ENCODE measurements at regions of chr9 and their contacts with region 1.

Region 1: GRCh38 chr9:101235105-101235866 is 149.5 kb downstream of the BAAT start:
- DNase-seq: no peak
- H3K4me3 ChIP-seq: no peak overlapping the region
- H3K27ac ChIP-seq: no peak overlapping the region
- H3K4me1 ChIP-seq: no peaks in the 10 kb centered on the region
- H3K27me3 ChIP-seq: no peaks in the 10 kb centered on the region
- CTCF ChIP-seq: peak in 2 of 3 donors; percentile 16 to 22
- POLR2A ChIP-seq: no peak

Region 2: GRCh38 chr9:99732715-99733114 is 1502.6 kb before region 1 on chr9:
- intact Hi-C with region 1: no loop called
- DNase-seq: no peak
- H3K4me3 ChIP-seq: peak overlapping the region in 1 of 3 donors; percentile 24
- H3K27ac ChIP-seq: peak overlapping the region in 1 of 2 donors; percentile 53
- H3K4me1 ChIP-seq: no peaks in the 10 kb centered on the region
- H3K27me3 ChIP-seq: no peaks in the 10 kb centered on the region
- CTCF ChIP-seq: no peak
- POLR2A ChIP-seq: no peak

Region 3: DNA sequence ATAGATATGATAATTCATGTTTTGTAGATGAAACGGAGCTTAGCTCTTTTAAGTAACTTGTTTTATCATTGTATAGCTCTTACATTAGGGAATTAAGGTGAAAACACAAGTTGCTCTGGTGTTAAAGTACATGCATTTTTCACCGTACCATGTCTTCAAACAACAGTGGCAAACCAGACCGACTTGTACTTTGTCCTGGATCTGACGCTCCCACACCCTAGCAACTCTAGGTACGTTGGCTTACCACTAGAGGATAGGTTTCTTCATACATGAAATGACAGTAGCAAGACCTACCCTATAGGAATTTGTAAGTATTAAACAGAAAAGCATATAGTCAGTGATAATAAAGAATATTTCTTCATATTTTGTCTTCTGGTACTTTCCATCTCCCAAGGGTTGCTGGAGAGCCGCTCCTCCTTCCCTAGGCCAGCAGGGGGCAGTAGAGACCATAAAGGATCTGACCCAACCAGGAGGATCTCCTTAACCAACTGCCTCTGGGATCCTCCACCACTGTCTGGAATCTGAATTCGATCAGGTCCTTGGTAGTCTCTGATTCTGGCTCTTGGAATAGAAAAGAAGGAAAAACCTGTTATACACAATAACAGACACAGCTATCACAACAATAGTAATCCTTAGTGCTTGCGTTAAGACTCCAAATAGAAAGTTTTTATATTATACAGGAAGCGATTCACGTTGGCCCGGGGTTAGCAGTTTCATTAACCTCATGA is 520.8 kb before region 1 on chr9:
- intact Hi-C with region 1: loop called (anchors 10 kb)
- DNase-seq: peak in 1 of 2 donors; percentile 32
- H3K4me3 ChIP-seq: no peak overlapping the region
- H3K27ac ChIP-seq: no peak overlapping the region
- H3K4me1 ChIP-seq: no peaks in the 10 kb centered on the region
- H3K27me3 ChIP-seq: peaks cover 0 to 3% of the 10 kb centered on the region in 2 donors
- CTCF ChIP-seq: peak in 2 of 3 donors; percentile 50 to 73
- POLR2A ChIP-seq: no peak

Region 4: GRCh38 chr9:101197026-101197425 is 38.3 kb before region 1 on chr9:
- intact Hi-C with region 1: no loop called
- DNase-seq: no peak
- H3K4me3 ChIP-seq: no peak overlapping the region
- H3K27ac ChIP-seq: no peak overlapping the region
- H3K4me1 ChIP-seq: no peaks in the 10 kb centered on the region
- H3K27me3 ChIP-seq: no peaks in the 10 kb centered on the region
- CTCF ChIP-seq: no peak
- POLR2A ChIP-seq: no peak

Region 5: DNA sequence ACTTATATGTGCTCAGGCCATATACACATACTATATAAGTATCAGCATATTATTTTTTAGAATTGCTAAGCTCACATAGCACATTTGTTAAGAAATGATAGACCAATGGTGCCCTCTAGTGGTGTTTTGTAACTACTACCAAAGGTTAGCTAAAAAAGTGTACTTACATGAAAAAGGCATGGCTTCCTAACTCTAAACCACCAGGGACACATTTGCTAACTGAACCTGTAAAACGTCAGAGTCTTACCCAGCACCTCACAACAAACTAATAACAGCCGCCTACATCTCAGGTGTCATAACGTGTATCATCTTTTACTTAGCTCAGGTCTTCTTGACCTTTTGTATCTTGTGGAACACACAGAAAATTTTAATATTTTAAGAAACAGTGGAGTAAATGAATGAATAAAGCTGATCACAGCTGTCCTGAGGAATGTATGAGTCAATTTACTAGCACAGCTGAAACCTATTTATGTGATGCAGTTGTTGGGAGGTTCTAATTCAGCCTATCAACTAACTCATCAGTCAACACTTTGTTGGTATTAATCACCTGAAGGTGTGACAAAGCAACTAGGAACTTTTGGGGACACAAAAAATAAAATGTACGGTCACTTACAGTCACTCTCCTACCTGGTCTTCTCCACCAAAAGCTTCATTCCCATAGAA is 76.6 kb after region 1 on chr9:
- intact Hi-C with region 1: no loop called
- DNase-seq: no peak
- H3K4me3 ChIP-seq: no peak overlapping the region
- H3K27ac ChIP-seq: no peak overlapping the region
- H3K4me1 ChIP-seq: no peaks in the 10 kb centered on the region
- H3K27me3 ChIP-seq: no peaks in the 10 kb centered on the region
- CTCF ChIP-seq: peak in 2 of 3 donors; percentile 60 to 63
- POLR2A ChIP-seq: no peak